Naive thymus-derived CD8-positive, alpha-beta T cell (primary cell): ENCODE measurements at regions of chr7 and their contacts with region 1.

Region 1: GRCh38 chr7:43925984-43926797 is at the start of gene UBE2D4:
- DNase-seq: peak; percentile 82 to 92 (median 87)
- ATAC-seq: peak; percentile 89 to 90
- H3K4me3 Mint-ChIP-seq: peak within 1 kb of the TSS; percentile 87 to 95 (median 93)
- H3K27ac Mint-ChIP-seq: peak within 1 kb of the TSS; percentile 89 to 98 (median 96)
- H3K4me1 Mint-ChIP-seq: peaks cover 18 to 43% (median 37%) of the 10 kb centered on the region in 4 donors
- H3K27me3 Mint-ChIP-seq: no peaks in the 10 kb centered on the region
- polyA plus RNA-seq, gene UBE2D4: 9.3 to 17.6 (median 10.8) TPM

Region 2: DNA sequence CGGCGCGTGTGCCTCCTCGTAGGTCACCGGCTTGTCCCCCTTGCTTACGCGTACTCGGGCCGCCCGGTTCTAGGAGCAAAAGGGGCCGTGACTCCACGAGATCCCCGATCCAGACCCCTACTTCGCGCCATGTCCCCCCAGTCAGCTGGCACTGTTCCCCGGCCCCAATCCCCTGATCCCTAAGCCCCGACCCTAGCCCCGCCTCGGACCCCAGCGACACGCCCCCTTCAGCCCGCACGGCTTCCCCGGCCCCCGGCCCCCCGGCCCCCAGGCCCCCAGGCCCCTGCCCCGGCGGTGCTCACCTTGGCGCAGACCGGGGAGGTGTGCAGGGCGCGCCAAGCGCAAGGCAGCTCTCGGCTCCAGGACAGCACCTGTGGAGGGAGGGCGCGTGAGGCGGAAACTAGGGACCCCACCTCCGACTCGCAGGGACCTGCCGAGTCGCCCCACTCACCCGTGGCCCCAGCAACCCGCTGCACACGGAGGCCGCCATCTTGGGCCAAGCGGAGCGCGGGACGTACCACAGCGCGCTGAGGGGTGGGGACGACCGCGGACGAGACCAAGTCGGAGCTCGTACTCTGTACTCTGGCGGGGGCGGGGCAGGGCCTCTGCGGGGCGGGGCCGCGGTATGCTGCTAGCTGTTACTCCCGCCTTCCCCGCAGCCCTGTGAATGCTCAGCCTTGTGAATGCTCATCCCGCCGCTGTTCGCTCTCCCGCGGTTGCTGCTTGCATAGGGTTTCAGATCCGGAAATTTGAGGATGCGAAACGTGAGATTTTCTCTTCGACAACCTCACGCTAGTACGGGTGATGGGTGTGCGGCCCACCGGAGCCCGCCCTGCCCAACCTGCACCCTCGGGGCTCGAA is 57.0 kb before region 1 on chr7 and contains the start of gene MRPS24:
- POLR2A ChIA-PET with region 1: interaction called, 14 read pairs
- DNase-seq: peak; percentile 88 to 97 (median 93)
- ATAC-seq: peak; percentile 95 to 98
- H3K4me3 Mint-ChIP-seq: peak within 1 kb of the TSS; percentile 92 to 97 (median 95)
- H3K27ac Mint-ChIP-seq: peak within 1 kb of the TSS; percentile 87 to 97 (median 94)
- H3K4me1 Mint-ChIP-seq: peaks cover 4 to 24% (median 23%) of the 10 kb centered on the region in 4 donors
- H3K27me3 Mint-ChIP-seq: no peaks in the 10 kb centered on the region
- polyA plus RNA-seq, gene MRPS24: 133 to 152 (median 142) TPM

Region 3: DNA sequence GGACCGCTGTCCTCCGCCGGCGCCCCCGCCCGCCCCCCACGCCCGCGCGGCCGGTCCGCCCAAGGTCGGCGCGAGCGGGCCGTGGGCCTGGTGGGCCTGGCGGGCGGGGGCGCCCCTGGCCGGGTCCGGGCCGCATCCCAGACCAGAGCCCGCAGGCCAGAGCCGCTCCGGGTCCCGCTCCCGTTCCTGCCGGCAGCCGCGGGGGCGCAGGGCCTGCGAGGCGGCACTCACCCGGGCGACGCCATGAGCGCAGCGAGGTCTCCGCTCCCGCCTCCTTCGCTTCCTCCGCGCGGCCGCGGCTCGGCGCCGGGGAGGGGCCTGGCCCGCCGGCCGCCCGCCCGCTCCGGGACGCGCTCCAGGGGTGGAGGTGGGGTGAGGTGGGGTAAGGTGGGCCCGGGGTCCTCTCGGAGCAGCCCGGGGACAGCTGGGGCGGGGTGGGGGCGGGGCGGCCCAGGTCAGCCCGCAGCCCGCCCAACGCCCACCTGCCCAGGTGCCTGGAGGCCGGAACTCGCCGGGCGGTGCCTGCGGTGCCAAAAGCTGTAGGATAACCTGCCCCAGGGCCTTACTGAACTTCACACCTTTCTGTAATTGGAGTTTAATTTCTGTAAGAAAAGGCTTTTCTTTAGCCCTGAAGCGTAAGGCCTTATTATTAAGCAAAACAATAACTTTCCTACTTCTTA is 19.7 kb before region 1 on chr7 and contains the start of gene URGCP:
- POLR2A ChIA-PET with region 1: interaction called, 10 read pairs
- DNase-seq: peak; percentile 35 to 75 (median 52)
- ATAC-seq: peak; percentile 91 to 92
- H3K4me3 Mint-ChIP-seq: peak within 1 kb of the TSS; percentile 85 to 97 (median 95)
- H3K27ac Mint-ChIP-seq: peak within 1 kb of the TSS; percentile 88 to 97 (median 96)
- H3K4me1 Mint-ChIP-seq: peaks cover 19 to 49% (median 40%) of the 10 kb centered on the region in 4 donors
- H3K27me3 Mint-ChIP-seq: no peaks in the 10 kb centered on the region
- polyA plus RNA-seq, gene URGCP: 20.1 to 34.2 (median 21.8) TPM

Region 4: GRCh38 chr7:44097064-44097932 is 171.1 kb after region 1 on chr7:
- POLR2A ChIA-PET with region 1: no interaction called
- DNase-seq: no peak
- ATAC-seq: peak in 1 of 2 donors; percentile 49
- H3K4me3 Mint-ChIP-seq: no peak overlapping the region
- H3K27ac Mint-ChIP-seq: peak overlapping the region in 3 of 10 donors; percentile 39 to 67 (median 49)
- H3K4me1 Mint-ChIP-seq: peaks cover 0 to 39% (median 7%) of the 10 kb centered on the region in 4 donors
- H3K27me3 Mint-ChIP-seq: no peaks in the 10 kb centered on the region